ENCODE measurements at regions of chr4 and their contacts with region 1.

Region 1: DNA sequence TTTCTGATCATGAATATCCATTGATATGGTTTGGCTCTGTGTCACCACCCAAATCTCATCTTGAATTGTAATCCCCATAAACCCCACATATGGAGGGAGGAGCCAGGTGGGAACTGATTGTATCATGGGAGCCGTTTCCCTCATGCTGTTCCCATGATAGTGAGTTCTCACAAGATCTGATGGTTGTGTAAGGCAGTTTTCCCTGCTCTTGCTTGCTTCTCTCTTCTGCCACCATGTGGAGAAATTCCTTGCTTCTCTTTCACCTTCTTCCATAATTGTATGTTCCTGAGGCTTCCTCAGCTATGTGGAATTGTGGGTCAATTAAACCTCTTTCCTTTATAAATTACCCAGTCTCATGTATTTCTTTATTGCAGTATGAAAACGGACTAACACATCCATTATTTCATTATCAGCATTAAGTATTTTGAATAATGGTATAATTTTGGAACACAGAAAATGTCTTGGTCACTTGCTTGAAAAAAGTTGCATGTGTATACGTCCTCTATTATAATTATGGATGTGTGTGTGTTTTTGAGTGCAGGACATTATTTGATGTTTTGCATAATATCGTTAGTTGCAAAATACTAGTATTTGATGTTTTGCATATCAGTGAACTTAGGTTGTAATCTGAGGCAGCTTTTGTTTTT is 334.6 kb downstream of the PCDH10 start:
- DNase-seq: peak; percentile 31 to 43
- H3K4me3 ChIP-seq: no peak overlapping the region
- H3K4me3 Mint-ChIP-seq: no peak overlapping the region
- H3K27ac Mint-ChIP-seq: no peak overlapping the region
- H3K4me1 ChIP-seq: no peaks in the 10 kb centered on the region
- H3K4me1 Mint-ChIP-seq: no peaks in the 10 kb centered on the region
- H3K27me3 ChIP-seq: no peaks in the 10 kb centered on the region
- H3K27me3 Mint-ChIP-seq: no peaks in the 10 kb centered on the region
- CTCF ChIP-seq: peak; percentile 48

Region 2: DNA sequence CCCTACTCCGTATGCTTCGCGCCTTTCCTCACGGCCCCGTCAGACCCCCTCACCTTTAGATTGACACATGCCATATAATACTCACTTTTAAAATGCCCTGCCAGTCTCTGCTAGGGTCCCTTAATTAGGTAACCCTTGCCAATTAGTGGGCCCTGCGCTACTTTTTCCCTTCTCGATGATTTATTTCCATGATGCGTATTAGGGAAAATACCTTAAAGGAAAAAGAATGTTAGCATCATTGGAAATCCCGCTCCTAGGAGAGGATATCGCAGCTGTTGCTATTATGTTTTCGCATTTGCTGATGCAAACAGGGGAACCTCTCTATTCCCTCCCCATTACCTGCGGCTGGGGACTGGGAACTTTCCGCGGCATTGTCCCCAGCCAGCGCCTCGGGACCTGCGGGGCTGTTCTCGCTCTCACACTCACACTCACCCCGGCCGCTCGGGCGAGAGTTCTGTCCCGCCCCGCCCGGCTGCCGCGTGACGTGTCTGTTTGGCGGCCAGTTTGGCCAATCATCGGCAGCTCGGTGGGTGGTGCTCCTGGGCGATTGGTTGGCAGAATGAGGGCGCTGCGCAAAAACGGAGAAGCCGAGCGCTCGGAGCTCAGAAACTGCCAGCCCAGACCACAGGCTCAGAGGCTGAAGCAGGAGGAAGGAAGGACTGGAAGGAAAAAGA is 334.9 kb before region 1 on chr4 and contains the start of gene PCDH10:
- CTCF ChIA-PET with region 1: no interaction called
- POLR2A ChIA-PET with region 1: no interaction called
- intact Hi-C with region 1: loop called (anchors 1 kb)
- DNase-seq: no peak
- H3K4me3 ChIP-seq: no peak within 1 kb of the TSS
- H3K4me3 Mint-ChIP-seq: no peak within 1 kb of the TSS
- H3K27ac Mint-ChIP-seq: no peak within 1 kb of the TSS
- H3K4me1 ChIP-seq: no peaks in the 10 kb centered on the region
- H3K4me1 Mint-ChIP-seq: no peaks in the 10 kb centered on the region
- H3K27me3 ChIP-seq: no peaks in the 10 kb centered on the region
- H3K27me3 Mint-ChIP-seq: peaks cover 4% of the 10 kb centered on the region
- CTCF ChIP-seq: no peak
- total RNA-seq, gene PCDH10: not detected in 2 replicates

Region 3: GRCh38 chr4:133154725-133155124 is 329.0 kb before region 1 on chr4:
- CTCF ChIA-PET with region 1: no interaction called
- POLR2A ChIA-PET with region 1: no interaction called
- intact Hi-C with region 1: loop called (anchors 2 kb)
- DNase-seq: peak in 1 of 2 experiments; percentile 11
- H3K4me3 ChIP-seq: no peak overlapping the region
- H3K4me3 Mint-ChIP-seq: no peak overlapping the region
- H3K27ac Mint-ChIP-seq: no peak overlapping the region
- H3K4me1 ChIP-seq: no peaks in the 10 kb centered on the region
- H3K4me1 Mint-ChIP-seq: no peaks in the 10 kb centered on the region
- H3K27me3 ChIP-seq: no peaks in the 10 kb centered on the region
- H3K27me3 Mint-ChIP-seq: peaks cover 4% of the 10 kb centered on the region
- CTCF ChIP-seq: peak in 1 of 2 experiments; percentile 46

Region 4: DNA sequence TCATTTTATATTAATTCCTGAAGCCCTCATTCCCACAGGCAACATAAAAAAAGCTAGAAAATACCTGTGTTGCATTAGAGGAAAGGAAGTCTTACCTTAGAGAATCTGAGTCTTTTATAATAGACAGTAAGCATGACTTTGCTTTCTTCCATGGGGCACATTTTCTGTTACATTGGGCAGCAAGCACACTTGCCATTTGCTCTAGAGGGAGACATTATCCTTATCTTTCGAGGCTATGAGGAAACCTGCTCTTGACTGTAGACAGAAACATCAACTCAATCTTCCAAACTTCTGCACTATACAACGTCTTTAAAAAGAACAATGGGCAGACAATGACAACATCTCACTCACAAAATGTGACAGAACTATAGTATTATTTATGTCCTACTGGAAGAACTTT is 246.0 kb before region 1 on chr4:
- CTCF ChIA-PET with region 1: no interaction called
- POLR2A ChIA-PET with region 1: no interaction called
- intact Hi-C with region 1: loop called (anchors 1 kb)
- DNase-seq: no peak
- H3K4me3 ChIP-seq: no peak overlapping the region
- H3K4me3 Mint-ChIP-seq: no peak overlapping the region
- H3K27ac Mint-ChIP-seq: no peak overlapping the region
- H3K4me1 ChIP-seq: no peaks in the 10 kb centered on the region
- H3K4me1 Mint-ChIP-seq: no peaks in the 10 kb centered on the region
- H3K27me3 ChIP-seq: no peaks in the 10 kb centered on the region
- H3K27me3 Mint-ChIP-seq: no peaks in the 10 kb centered on the region
- CTCF ChIP-seq: no peak

Region 5: GRCh38 chr4:133320576-133321170 is 163.1 kb before region 1 on chr4:
- CTCF ChIA-PET with region 1: no interaction called
- POLR2A ChIA-PET with region 1: no interaction called
- intact Hi-C with region 1: loop called (anchors 1 kb)
- DNase-seq: peak in 1 of 2 experiments; percentile 36
- H3K4me3 ChIP-seq: no peak overlapping the region
- H3K4me3 Mint-ChIP-seq: no peak overlapping the region
- H3K27ac Mint-ChIP-seq: no peak overlapping the region
- H3K4me1 ChIP-seq: no peaks in the 10 kb centered on the region
- H3K4me1 Mint-ChIP-seq: no peaks in the 10 kb centered on the region
- H3K27me3 ChIP-seq: no peaks in the 10 kb centered on the region
- H3K27me3 Mint-ChIP-seq: peaks cover under 1% of the 10 kb centered on the region
- CTCF ChIP-seq: peak; percentile 46 to 53

Region 6: GRCh38 chr4:133711817-133712216 is 228.1 kb after region 1 on chr4:
- CTCF ChIA-PET with region 1: no interaction called
- POLR2A ChIA-PET with region 1: no interaction called
- intact Hi-C with region 1: no loop called
- DNase-seq: peak in 1 of 2 experiments; percentile 2
- H3K4me3 ChIP-seq: no peak overlapping the region
- H3K4me3 Mint-ChIP-seq: no peak overlapping the region
- H3K27ac Mint-ChIP-seq: no peak overlapping the region
- H3K4me1 ChIP-seq: 0 out of 2 replicates have a peak, but pooled peaks cover 4% of the 10 kb centered on the region
- H3K4me1 Mint-ChIP-seq: no peaks in the 10 kb centered on the region
- H3K27me3 ChIP-seq: no peaks in the 10 kb centered on the region
- H3K27me3 Mint-ChIP-seq: no peaks in the 10 kb centered on the region
- CTCF ChIP-seq: no peak